Activated B cell treated with CpG ODN at 0.5 μM for 24 hours (primary cell): ENCODE measurements at regions of chr6 and their contacts with region 1.

Region 1: GRCh38 chr6:43308101-43308989 is at the start of gene CRIP3:
- DNase-seq: peak; percentile 58
- ATAC-seq: peak; percentile 75
- H3K4me3 Mint-ChIP-seq: peak within 1 kb of the TSS; percentile 90
- H3K27ac Mint-ChIP-seq: peak within 1 kb of the TSS; percentile 69
- H3K4me1 Mint-ChIP-seq: peaks cover 53% of the 10 kb centered on the region
- H3K27me3 Mint-ChIP-seq: no peaks in the 10 kb centered on the region
- CTCF ChIP-seq: no peak
- total RNA-seq, gene CRIP3: 42.2 and 49.9 TPM in 2 replicates

Region 2: DNA sequence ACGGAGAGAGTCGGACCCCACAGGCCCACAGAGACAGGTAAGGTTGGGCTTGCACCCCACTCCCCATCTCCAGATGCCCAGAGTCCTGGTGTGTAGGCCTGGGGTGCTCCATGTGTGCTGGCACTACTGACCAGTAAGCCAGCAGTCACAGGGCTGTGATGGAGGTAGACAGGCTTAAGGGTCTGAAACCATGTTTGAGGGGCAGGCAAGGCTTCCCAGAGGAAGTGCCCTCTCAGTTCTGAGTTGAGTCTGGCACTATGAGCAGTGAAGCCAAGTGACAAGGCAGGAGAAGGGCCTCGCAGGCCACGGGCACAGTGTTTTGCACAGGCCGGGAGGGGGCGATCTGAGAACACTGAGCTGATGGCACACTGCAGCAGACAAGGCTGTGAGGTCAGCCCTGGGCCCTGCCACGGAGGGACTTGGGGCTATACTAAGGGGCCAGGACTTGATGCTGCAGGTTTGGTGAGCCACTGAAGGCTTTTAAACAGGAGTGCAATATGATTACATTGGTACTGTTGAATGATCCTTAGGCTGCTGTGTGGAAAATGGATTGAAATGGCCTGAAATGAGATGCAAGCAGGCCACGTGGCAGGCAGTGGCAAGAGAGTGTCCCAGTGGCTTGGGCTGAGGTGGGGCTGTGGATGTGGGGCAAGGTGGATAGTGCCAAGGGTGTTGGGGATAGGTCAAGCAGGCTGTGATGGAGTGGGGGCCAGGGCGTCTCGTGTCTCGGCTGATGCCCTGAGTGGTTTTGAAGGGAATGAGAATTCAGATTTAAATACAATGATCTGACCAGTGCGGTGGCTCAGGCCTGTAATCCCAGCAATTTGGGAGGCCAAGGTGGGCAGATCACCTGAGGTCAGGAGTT is 44.8 kb before region 1 on chr6:
- CTCF ChIA-PET with region 1: interaction called, 9 read pairs
- POLR2A ChIA-PET with region 1: interaction called, 7 read pairs
- intact Hi-C with region 1: loop called (anchors 1 kb)
- DNase-seq: peak; percentile 72
- ATAC-seq: peak; percentile 100
- H3K4me3 Mint-ChIP-seq: no peak overlapping the region
- H3K27ac Mint-ChIP-seq: peak overlapping the region; percentile 12
- H3K4me1 Mint-ChIP-seq: peaks cover 6% of the 10 kb centered on the region
- H3K27me3 Mint-ChIP-seq: no peaks in the 10 kb centered on the region
- CTCF ChIP-seq: peak; percentile 27

Region 3: DNA sequence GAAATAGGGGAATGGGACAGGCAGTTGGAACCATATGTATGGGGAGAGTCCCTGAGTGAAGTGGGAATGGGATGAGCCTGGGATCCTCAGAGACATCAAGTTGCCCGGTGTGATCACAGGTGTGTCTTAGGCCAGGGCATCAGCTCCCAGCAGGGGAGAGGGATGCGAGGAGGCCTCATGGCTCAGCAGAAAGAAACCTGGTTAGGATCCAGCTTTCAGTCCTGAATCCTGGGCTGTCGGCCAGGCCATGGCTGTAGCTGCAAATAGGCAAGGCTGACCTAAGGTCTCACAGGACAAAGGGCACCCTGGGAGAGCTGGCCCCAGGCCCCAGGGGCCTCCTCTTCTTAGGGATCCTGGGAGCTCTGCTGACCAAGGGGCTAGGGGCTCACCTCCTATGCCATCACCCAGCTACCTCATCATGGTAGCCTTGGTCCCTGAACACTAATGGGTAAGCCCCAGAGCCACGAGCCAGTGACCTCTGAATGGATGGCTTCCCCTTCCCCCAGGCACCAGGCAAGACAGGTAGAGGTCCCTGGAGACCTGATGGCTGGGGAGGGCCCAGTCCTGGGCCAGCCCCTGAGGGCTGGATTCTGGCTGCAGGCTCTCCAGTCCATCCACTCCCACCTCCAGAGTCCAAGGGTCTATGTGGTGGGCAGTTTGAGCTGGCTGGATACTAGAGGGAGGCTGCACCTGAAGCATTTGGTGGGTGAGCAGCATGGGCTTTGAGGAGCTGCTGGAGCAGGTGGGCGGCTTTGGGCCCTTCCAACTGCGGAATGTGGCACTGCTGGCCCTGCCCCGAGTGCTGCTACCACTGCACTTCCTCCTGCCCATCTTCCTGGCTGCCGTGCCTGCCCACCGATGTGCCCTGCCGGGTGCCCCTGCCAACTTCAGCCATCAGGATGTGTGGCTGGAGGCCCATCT is 10.4 kb before region 1 on chr6 and contains the start of gene SLC22A7:
- CTCF ChIA-PET with region 1: interaction called, 13 read pairs
- POLR2A ChIA-PET with region 1: interaction called, 5 read pairs
- intact Hi-C with region 1: no loop called
- DNase-seq: no peak
- ATAC-seq: no peak
- H3K4me3 Mint-ChIP-seq: no peak within 1 kb of the TSS
- H3K27ac Mint-ChIP-seq: no peak within 1 kb of the TSS
- H3K4me1 Mint-ChIP-seq: peaks cover 4% of the 10 kb centered on the region
- H3K27me3 Mint-ChIP-seq: peaks cover 2% of the 10 kb centered on the region
- CTCF ChIP-seq: no peak
- total RNA-seq, gene SLC22A7: not detected in 2 replicates

Region 4: DNA sequence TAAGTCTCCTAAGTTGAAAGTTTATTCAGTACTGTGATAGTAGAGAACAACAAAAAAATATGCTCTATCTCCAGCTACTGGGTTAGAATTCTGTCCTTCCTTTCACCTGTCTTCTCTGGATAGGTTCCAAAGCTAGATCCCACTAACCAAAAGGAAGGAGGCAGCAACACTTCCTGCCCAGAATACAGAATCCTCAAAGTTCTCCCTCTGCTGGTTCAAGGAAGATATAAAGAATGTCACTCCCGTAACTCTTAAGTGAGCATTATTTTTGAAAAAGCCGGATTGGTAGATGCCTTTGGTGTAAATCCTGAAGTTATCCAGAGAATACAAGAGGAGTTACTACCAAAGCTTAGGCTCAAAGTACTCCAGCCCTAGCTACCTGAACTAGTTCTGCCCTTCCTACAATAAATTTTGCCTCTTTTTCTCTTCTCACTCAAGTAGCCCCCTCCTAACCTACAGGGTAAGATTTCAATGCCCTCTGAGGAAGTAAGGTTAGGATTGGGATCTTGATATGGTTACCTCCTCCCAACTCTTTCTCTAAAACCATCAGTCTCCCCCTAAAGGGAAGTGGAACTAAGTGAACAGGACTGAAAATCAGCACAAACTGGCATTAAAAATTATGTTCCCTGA is 26.2 kb after region 1 on chr6:
- CTCF ChIA-PET with region 1: interaction called, 52 read pairs
- POLR2A ChIA-PET with region 1: interaction called, 14 read pairs
- intact Hi-C with region 1: loop called (anchors 1 kb)
- DNase-seq: no peak
- ATAC-seq: no peak
- H3K4me3 Mint-ChIP-seq: no peak overlapping the region
- H3K27ac Mint-ChIP-seq: peak overlapping the region; percentile 15
- H3K4me1 Mint-ChIP-seq: peaks cover 56% of the 10 kb centered on the region
- H3K27me3 Mint-ChIP-seq: no peaks in the 10 kb centered on the region
- CTCF ChIP-seq: no peak

Region 5: DNA sequence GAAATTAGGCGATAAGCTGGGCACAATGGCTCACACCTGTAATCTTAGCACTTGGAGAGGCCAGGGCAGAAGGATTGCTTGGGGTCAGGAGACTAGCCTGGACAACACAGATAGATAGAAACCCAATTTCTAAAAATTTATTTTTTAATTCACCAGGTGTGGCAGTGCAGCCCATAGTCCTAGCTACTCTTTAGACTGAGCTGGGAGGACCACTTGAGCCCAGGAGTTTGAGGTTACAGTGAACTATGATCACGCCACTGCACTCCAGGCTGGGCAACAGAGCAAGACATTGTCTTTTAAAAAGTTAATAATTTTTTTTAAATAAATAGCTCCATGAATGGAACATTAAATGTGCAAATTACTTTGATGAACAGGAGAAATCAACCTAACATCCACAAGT is 52.9 kb after region 1 on chr6:
- CTCF ChIA-PET with region 1: interaction called, 21 read pairs
- POLR2A ChIA-PET with region 1: interaction called, 4 read pairs
- intact Hi-C with region 1: loop called (anchors 1 kb)
- DNase-seq: no peak
- ATAC-seq: peak; percentile 37
- H3K4me3 Mint-ChIP-seq: no peak overlapping the region
- H3K27ac Mint-ChIP-seq: peak overlapping the region; percentile 7
- H3K4me1 Mint-ChIP-seq: peaks cover 55% of the 10 kb centered on the region
- H3K27me3 Mint-ChIP-seq: no peaks in the 10 kb centered on the region
- CTCF ChIP-seq: no peak

Region 6: DNA sequence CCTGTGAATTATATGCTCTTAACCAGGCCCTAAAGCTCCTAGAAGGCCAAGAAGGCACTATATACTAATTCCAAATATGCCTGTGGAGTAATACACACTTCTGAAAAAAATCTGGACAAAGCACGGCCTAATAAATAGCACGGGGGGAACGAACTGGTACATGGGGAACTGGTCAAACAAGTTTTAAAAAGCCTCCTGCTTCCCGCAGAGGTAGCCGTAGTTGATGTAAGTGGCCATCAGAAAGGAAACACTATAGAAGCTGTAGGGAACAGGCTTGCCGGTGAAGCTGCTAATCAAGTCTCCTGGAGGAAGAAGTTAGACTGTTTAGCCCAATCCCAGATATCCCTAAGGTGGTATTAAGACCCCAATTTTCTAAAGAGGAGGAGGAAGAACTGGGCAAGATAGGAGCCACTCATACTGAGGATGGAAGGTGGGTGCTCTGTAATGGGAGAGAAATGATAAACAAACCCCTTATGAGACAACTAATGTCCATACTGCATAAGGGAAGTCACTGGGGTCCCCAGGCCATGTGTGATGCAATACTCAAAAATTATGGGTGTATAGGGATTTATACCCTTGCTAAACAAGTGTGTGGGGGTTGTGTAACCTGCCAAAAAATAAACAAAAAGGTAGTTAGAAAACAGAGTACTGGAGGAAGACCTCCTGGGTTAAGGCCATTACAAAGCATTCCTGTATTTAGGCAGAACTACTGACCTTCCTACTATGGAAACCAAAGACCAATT is 88.2 kb after region 1 on chr6:
- CTCF ChIA-PET with region 1: interaction called, 24 read pairs
- POLR2A ChIA-PET with region 1: interaction called, 7 read pairs
- intact Hi-C with region 1: loop called (anchors 1 kb)
- DNase-seq: no peak
- ATAC-seq: no peak
- H3K4me3 Mint-ChIP-seq: no peak overlapping the region
- H3K27ac Mint-ChIP-seq: peak overlapping the region; percentile 37
- H3K4me1 Mint-ChIP-seq: peaks cover 47% of the 10 kb centered on the region
- H3K27me3 Mint-ChIP-seq: peaks cover 7% of the 10 kb centered on the region
- CTCF ChIP-seq: no peak

Region 7: GRCh38 chr6:43506667-43507471 is 198.5 kb after region 1 on chr6:
- CTCF ChIA-PET with region 1: interaction called, 4 read pairs
- POLR2A ChIA-PET with region 1: no interaction called
- intact Hi-C with region 1: loop called (anchors 1 kb)
- DNase-seq: peak; percentile 67
- ATAC-seq: peak; percentile 60
- H3K4me3 Mint-ChIP-seq: no peak overlapping the region
- H3K27ac Mint-ChIP-seq: no peak overlapping the region
- H3K4me1 Mint-ChIP-seq: peaks cover 19% of the 10 kb centered on the region
- H3K27me3 Mint-ChIP-seq: peaks cover 9% of the 10 kb centered on the region
- CTCF ChIP-seq: peak; percentile 53